Right ventricle myocardium inferior (tissue), 1 donor: ENCODE measurements at regions of chr7 and their contacts with region 1.

Region 1: DNA sequence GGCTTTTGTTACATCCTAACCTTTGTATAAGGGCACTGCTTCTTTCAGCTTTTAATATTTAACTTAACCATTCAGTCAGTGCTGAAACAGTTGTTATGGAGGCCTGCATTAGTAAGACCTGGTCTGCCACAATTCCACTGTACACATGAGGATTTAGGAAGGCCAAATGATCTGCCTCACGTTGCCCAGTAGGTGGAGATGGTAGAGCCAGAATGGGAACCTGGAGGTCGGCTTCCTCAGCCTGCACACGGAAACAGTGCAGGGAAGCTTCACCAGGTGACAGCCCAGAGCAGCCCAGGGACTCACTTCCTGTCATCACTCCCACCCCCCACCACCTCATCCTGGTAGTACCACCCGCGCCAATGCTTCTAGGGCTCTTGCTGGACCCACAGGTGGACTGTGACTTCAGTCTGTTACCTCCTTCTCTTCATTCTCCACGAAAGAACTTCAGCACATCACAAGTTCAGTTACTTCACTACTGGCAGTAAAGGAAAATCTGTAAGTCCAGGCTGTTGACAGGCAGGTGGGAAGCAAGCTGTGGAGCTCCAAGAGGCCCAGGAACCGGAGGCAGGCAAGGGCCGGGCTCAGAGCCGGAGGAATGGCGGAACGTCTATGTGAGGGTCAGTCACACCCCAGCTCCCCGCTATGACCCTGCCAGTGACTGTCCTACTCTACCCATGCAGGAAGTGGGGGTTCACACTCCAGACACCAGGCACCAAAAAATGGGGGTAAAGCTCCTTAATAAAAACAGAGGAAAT is 480.3 kb upstream of the C7orf33 start:
- DNase-seq: no peak
- ATAC-seq: no peak

Region 2: GRCh38 chr7:148242294-148242801 is 132.1 kb after region 1 on chr7:
- intact Hi-C with region 1: loop called (anchors 1 kb)
- DNase-seq: no peak
- ATAC-seq: peak; percentile 88

Region 3: GRCh38 chr7:148318102-148318811 is 208.0 kb after region 1 on chr7:
- intact Hi-C with region 1: no loop called
- DNase-seq: no peak
- ATAC-seq: no peak